Activated CD8-positive, alpha-beta memory T cell treated with anti-CD3 and anti-CD28 coated beads, Interleukin-2, amount 10 ng/mL, durations not matched to agents 7 days and 5 days (primary cell): ENCODE measurements at regions of chr10 and their contacts with region 1.

Region 1: DNA sequence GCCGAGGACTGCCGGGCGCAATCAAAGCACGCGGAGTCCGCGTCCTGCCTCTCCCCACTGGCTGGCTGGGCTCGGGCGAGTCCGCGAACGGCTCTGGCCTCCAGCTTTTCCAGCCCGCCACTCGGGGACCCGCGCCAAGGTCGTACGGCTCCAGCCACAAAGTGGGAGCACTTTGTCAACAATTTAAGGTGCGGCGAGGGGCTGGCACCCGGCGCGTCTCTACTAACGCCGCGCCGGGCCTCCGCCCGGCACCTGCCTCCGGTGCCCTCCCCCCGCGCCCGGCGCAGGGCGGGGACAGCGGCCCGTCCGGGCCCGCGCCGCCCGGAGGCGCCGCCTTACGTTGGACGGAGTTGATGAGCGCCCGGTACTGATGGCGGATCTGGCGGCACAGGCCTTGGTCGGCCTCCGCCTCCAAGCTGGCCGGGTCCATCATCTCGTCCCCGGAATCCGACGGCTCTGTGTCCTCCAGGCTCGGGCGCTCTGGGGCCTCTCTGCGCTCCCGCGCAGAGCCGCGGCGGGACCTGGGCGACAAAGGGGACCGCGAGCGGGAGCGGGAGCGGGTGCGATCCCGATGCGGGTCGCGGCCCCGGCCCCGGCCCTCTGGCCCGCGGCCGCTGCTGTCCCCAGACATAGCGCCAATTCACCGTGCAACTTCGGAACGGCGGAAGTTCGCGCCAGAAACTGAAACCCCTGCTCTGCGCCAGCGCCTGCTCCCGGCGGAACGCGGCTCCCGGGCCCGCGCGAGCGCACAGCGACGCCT is at the start of gene NSMCE4A:
- DNase-seq: peak; percentile 80
- ATAC-seq: peak; percentile 92
- H3K4me3 Mint-ChIP-seq: peak within 1 kb of the TSS; percentile 78
- H3K27ac Mint-ChIP-seq: peak within 1 kb of the TSS; percentile 64
- H3K4me1 Mint-ChIP-seq: peaks cover 19% of the 10 kb centered on the region
- H3K27me3 Mint-ChIP-seq: no peaks in the 10 kb centered on the region
- total RNA-seq, gene NSMCE4A: 60.3 to 67.1 TPM

Region 2: GRCh38 chr10:121781101-121781500 is 193.6 kb before region 1 on chr10:
- CTCF ChIA-PET with region 1: no interaction called
- DNase-seq: no peak
- ATAC-seq: no peak
- H3K4me3 Mint-ChIP-seq: no peak overlapping the region
- H3K27ac Mint-ChIP-seq: no peak overlapping the region
- H3K4me1 Mint-ChIP-seq: no peaks in the 10 kb centered on the region
- H3K27me3 Mint-ChIP-seq: no peaks in the 10 kb centered on the region

Region 3: GRCh38 chr10:121914661-121915060 is 60.1 kb before region 1 on chr10:
- CTCF ChIA-PET with region 1: no interaction called
- DNase-seq: no peak
- ATAC-seq: no peak
- H3K4me3 Mint-ChIP-seq: no peak overlapping the region
- H3K27ac Mint-ChIP-seq: no peak overlapping the region
- H3K4me1 Mint-ChIP-seq: peaks cover 10% of the 10 kb centered on the region
- H3K27me3 Mint-ChIP-seq: no peaks in the 10 kb centered on the region

Region 4: DNA sequence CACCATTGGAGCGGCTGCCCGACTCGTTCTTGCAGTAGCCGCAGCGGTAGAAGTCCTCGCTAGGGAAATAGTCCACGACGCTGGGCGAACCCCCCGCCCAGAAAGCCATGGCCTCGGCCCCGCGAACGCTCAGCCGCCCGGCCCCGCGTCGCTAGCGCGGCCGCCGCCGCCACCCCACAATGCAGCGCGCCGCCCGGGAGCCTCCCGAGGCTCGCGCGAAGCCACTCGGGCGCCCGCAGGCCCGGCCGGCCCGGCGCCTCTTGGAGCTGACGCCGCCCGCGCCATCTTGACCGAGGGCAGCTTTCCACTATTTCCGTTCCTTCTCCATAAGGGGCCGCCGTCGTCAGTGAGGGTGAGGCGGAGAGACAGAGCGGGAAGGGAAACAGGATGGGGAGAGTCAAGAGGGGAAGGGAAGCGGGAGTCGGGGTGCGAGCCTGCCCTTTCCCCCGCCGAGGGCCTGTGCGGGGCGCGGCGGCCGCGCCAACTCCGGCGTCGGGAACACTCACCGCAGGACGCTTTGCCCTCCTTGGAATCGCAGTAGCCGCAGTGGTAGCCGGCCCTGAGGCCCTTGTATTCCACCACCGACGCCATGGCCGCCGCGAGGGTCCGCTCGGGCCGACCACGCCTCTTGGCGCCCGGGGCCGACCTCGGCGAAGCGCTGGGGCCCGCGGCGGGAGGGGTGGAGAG is 46.7 kb before region 1 on chr10 and contains the start of gene ATE1:
- CTCF ChIA-PET with region 1: interaction called, 10 read pairs
- DNase-seq: peak; percentile 85
- ATAC-seq: peak; percentile 95
- H3K4me3 Mint-ChIP-seq: peak within 1 kb of the TSS; percentile 95
- H3K27ac Mint-ChIP-seq: peak within 1 kb of the TSS; percentile 95
- H3K4me1 Mint-ChIP-seq: peaks cover 15% of the 10 kb centered on the region
- H3K27me3 Mint-ChIP-seq: no peaks in the 10 kb centered on the region
- total RNA-seq, gene ATE1: 26.6 to 28.1 TPM

Region 5: DNA sequence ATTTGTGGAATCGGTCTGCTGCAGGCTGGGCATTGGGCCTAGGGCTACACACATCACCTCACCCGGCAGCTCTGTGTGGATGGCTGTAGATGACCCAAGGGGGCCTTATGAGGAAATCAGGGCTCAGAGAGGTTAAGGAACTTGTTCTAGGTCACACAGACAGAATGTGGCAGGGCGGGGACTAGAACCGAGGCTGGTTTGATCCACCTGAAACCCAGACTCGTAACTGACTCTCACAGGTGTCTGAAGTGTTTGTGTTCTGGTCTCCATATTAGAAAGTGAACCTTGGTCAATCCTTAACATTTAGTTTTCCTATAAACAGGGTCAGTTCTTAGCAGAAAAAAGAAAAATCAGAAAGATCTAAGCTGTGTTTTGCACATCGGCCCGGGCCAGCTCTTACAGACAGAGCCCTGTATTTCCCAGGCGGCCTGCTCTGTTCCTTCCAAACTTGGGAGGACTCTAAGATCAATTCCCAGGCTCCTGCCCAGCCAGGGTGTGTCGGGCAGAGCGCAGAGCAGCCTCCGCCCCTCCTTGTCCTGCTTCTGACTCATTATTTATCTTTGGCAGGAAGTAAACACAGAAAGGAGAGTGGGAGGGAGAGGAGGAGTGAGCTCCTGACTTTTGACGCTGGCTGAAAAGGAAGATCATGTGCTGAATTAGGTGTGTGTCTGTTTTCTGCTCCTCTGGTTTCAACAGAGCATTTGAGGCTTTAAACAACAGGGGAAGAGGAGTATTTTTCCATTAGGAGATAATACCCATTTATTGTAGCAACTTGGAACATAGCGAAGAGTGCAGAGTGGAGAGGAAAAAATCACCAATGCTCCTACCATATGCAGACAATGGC is 88.3 kb after region 1 on chr10:
- CTCF ChIA-PET with region 1: no interaction called
- DNase-seq: no peak
- ATAC-seq: no peak
- H3K4me3 Mint-ChIP-seq: no peak overlapping the region
- H3K27ac Mint-ChIP-seq: no peak overlapping the region
- H3K4me1 Mint-ChIP-seq: no peaks in the 10 kb centered on the region
- H3K27me3 Mint-ChIP-seq: no peaks in the 10 kb centered on the region